RWPE1 (cell line): ENCODE measurements at regions of chr17 and their contacts with region 1.

Region 1: DNA sequence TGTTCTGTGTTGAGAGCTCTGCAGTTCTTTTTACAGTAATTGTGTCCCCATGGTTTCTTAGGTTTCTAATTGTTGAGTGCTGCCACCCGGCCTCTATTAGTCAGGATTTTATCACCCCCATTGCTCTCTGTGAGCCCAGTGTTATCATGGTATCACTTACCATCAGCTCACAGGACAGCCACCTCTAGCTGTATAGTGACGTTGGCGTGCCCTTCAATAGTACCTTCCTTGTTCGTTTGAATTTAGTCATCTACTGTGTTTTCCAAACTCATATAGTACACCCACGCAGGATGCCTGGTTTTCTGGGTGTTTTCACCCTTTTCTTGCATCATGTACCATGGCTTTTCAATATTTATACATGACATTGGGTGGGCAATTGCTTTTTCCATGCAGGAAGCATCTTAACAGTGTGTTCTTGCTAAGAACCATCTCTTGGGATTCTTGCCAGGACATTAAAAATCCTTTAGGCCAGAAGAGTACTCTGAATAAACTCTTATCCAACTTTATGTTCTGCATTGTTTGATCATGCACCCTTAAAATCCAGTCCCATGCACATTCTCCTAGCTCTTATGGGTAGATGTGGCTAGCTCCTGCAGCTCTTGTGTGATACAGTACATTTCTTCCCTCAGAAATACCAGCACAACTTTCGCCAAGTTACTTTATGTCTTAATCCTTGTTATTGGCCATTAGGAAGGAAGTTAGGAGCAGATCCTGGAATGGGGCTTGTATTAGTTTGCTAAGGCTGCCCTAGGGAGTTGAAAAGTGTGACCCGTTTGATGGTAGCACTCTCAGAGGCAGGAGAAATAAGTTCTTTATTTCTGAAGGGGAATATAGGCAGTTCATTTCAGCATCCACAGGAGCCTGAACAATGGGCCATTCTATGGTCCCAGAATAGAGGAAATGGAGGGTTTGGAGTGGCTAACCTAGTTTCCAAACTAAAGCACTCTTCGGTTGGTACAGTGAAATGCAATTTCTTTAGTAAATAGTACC is 11.3 kb upstream of the ABCA10 start:
- DNase-seq: no peak
- H3K27ac ChIP-seq: no peak overlapping the region
- CTCF ChIP-seq: no peak

Region 2: DNA sequence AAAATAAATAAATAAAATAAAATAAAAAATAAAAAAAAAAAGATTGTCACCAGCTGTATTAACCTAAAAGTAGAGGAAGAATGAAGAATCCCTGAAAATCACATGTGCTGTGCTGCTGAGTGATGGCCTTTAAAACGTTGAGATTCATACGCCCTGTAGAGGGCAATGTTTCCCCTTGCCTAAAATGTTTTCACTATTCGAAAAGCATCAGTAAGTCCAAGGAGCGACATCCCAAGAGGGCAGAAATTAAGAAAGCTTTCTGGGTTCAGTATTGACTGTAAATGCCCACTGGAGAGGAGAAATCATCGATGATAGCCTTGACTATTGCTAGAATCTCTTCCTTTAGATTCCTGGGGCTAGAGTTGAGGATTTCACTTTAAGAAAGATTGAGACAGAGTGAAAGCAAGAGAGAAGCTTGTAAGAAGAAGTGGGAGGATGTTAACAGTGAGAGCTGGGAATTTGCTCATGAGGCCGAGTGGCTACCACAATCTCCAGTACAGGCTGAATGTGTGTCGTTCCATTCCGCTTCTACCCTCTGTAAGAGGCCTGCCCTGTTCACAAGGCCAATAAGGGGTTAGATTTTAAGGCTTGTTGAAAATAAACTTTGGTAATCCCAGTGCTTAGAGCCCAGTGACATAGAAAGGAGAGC is 467.9 kb before region 1 on chr17:
- CTCF ChIA-PET with region 1: interaction called, 13 read pairs
- POLR2A ChIA-PET with region 1: no interaction called
- DNase-seq: peak; percentile 38
- H3K27ac ChIP-seq: no peak overlapping the region
- CTCF ChIP-seq: peak; percentile 71